ENCODE measurements at regions of chr12 and their contacts with region 1.

Region 1: GRCh38 chr12:40921563-40922163 is 229.4 kb downstream of the CNTN1 start:
- DNase-seq: no peak
- H3K4me3 ChIP-seq: no peak overlapping the region
- H3K27ac ChIP-seq: no peak overlapping the region
- H3K4me1 ChIP-seq: no peaks in the 10 kb centered on the region
- H3K27me3 ChIP-seq: peaks cover 0 to 3% (median 0%) of the 10 kb centered on the region in 7 donors
- CTCF ChIP-seq: peak in 9 of 11 experiments; percentile 7 to 68 (median 55)
- POLR2A ChIP-seq: no peak

Region 2: DNA sequence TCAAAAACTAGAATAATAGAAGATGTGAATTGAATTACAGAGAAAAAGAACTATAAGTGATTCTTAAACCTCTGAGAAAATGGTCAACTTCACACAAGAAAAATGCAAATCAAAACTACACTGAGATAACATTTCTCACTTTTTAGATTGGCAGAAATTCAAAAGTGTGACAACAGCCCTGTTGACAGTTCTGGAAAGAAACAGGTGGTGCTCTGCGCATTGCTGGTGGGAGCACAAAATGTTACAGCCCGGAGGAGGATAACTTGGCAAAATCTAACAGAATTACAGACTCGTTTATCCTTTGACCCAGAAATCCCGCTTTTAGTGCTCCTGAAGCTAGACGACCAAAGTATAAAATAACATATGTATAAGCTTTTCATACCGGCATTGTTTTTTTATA is 451.9 kb before region 1 on chr12:
- intact Hi-C with region 1: no loop called
- DNase-seq: no peak
- H3K4me3 ChIP-seq: no peak overlapping the region
- H3K27ac ChIP-seq: no peak overlapping the region
- H3K4me1 ChIP-seq: no peaks in the 10 kb centered on the region
- H3K27me3 ChIP-seq: no peaks in the 10 kb centered on the region
- CTCF ChIP-seq: no peak
- POLR2A ChIP-seq: no peak

Region 3: GRCh38 chr12:40622246-40622838 is 299.3 kb before region 1 on chr12:
- intact Hi-C with region 1: loop called (anchors 5 kb)
- DNase-seq: no peak
- H3K4me3 ChIP-seq: no peak overlapping the region
- H3K27ac ChIP-seq: no peak overlapping the region
- H3K4me1 ChIP-seq: no peaks in the 10 kb centered on the region
- H3K27me3 ChIP-seq: no peaks in the 10 kb centered on the region
- CTCF ChIP-seq: peak in 10 of 11 experiments; percentile 27 to 72 (median 48)
- POLR2A ChIP-seq: no peak

Measured in spleen (tissue), 13 donors.